GM18951 (cell line): ENCODE measurements at regions of chr1 and their contacts with region 1.

Region 1: DNA sequence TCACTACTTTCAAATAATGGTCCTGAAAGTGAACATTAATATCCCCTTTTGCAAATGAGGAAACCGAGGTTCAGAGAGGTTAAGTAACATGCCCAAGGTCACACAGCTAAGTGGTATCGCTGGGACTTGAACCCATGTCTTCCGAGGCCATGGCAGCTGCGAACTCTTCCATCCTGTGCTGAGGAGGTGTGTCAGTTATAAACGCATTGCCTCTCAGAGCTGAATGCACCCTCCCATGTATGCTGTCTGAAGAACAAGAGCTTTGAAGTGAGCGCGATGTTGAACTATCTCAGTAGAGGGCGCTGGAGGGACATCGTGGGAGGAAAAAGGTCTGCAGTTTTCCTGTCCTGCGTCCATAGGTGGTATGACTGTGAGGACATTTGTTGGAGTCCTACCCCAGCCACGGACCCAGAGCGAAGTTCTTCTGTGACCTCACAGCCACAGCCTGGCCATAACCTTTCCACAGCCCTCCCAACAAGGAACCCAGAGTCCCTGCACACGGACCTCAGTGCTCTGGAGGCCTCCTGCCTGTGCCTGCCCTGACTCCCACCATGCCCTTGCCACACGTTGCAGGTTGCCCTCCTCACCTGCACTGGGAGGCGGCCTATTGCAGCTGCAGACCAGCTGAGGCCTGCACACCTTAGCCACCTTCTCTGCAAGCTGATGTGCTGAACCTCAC is 7.5 kb downstream of the MYOC start:
- POLR2A ChIP-seq: no peak

Region 2: DNA sequence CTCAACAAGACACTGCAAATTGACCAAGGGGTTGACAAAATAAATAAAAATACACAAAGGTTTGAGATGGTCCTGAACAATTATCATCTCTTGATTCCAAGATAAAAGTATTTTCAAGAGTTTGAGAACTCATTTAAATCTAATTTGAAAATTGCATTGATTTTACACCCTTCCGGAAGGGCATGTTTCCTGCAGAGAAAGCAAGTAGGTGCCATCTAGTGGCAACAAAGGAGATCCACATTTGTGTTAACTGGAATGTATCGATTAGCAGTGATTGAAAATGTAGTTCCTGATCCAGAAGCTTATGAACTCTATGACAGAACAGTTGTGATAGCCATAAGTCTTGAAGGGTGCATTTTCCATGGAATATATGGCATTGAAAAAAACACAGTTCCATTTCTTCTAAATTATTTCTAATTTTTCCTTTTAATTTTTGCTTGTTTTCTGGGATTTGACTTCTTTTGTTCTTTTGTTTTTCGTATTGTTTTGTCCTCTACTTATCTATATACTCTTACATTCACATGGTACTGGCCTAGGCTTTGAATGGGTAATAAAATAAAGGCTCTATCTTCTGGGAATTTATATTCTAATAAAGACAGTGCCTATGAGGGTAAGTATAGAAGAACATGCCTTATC is 340.0 kb after region 1 on chr1:
- in situ Hi-C with region 1: loop called (anchors 25 kb)
- POLR2A ChIP-seq: no peak